Esophagus muscularis mucosa (tissue), 4 donors: ENCODE measurements at regions of chr4 and their contacts with region 1.

Region 1: GRCh38 chr4:173025131-173025530 is 143.5 kb upstream of the GALNT7 start:
- DNase-seq: peak; percentile 88
- H3K4me3 ChIP-seq: no peak overlapping the region
- H3K27ac ChIP-seq: no peak overlapping the region
- H3K4me1 ChIP-seq: peaks cover 0 to 3% (median 0%) of the 10 kb centered on the region in 4 donors
- H3K27me3 ChIP-seq: no peaks in the 10 kb centered on the region
- CTCF ChIP-seq: peak; percentile 64 to 74 (median 71)
- EP300 ChIP-seq: no peak
- POLR2A ChIP-seq: no peak

Region 2: DNA sequence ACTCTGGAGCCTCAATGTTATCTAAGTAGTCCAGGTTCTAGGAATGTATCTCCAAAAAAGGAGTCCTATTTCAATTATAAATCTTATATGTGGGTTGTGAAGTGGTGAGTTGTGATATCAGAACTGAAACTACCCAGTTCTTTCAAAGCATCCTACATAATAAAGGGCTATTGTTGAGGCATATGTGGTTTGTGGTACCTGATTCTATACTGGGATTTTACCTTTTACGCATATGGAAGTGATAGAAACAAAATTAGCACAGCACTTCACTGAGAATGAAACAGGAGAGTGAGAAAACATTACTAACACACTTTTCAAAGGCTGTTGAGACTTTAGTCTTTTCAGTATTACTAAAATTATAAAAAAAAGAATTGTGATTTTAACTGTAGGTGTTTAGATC is 274.2 kb before region 1 on chr4:
- intact Hi-C with region 1: no loop called
- DNase-seq: no peak
- H3K4me3 ChIP-seq: no peak overlapping the region
- H3K27ac ChIP-seq: no peak overlapping the region
- H3K4me1 ChIP-seq: no peaks in the 10 kb centered on the region
- H3K27me3 ChIP-seq: no peaks in the 10 kb centered on the region
- CTCF ChIP-seq: no peak
- EP300 ChIP-seq: no peak
- POLR2A ChIP-seq: no peak

Region 3: DNA sequence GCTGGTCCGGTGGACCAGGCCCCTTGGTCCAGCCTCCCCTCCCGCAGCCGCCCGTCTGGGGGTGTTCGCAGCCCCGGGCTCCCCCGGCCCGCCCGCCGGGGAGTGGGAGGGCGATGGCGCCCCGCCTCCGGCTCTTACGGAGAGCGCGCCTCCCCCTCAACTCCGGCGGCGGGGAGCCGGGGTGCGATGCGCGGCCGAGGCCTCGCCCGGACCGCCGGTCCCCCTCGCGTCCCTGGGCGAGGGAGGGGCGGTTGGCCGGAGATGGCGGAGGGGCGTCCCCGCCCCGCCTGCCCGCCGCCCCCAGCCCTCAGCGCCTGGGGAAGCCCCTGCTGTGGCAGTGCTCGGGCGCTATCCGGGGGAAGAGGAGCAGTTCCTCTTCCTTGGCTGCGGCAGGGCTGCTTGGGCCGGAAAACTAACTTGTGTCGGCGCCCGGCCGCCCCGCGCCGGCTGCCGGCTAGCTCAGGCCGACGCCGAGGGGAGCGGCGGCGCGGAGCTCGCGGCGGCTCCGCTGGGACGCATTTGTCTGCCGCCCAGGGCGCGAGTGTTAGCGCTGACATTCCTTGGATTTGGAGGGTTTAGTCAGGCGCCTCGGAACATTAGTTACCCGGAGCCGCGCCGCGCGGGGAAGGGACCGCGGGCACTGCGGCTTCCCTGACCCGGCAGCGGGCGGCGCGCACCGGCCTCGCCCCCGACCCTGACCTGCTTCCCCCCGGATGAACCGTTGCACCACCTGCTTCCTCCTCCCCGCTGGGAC is 144.5 kb after region 1 on chr4:
- intact Hi-C with region 1: loop called (anchors 10 kb)
- DNase-seq: peak; percentile 91
- H3K4me3 ChIP-seq: peak overlapping the region; percentile 88 to 99 (median 92)
- H3K27ac ChIP-seq: peak overlapping the region; percentile 91 to 95 (median 93)
- H3K4me1 ChIP-seq: peaks cover 7 to 29% (median 23%) of the 10 kb centered on the region in 4 donors
- H3K27me3 ChIP-seq: no peaks in the 10 kb centered on the region
- CTCF ChIP-seq: no peak
- EP300 ChIP-seq: no peak
- POLR2A ChIP-seq: no peak

Region 4: DNA sequence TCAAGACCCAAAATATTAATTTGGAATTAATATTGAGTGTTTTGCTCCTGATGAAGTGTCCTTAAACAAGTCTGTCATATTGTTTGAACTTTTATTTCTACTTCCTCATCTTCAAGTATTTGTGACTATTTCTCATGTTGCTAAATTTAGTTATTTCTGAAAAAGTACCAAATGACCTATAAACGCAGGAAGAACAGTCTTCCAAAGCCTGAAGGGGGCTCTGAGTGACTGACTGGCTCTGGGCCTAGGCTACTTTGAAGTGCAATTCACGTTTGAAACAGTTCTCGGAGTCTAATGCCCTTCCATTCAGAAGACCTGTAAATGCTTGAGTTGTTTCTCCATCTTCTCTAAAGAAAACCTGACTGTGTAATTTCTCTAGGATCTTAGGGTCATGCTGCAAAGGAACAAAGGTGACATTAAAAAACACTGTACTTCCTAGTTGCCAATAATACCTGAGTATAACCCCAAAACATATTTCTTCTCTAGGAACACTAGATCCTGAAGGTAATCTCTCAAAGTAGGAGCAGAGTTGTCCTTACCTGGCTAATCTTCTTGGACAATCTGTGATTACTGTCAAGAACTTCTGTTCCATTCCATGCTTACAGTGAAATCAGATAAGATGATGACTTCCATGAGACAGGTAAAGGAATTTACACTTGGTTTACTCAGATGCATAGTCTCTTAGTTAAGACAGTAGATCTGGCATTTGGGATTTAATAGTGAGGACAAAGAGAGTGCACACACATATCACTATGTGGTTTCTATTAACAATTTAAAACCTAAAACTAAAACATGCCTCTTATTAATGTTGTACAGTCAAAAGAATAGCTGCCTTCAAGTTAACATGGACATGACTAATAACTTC is 170.2 kb after region 1 on chr4:
- intact Hi-C with region 1: no loop called
- DNase-seq: no peak
- H3K4me3 ChIP-seq: no peak overlapping the region
- H3K27ac ChIP-seq: no peak overlapping the region
- H3K4me1 ChIP-seq: peaks cover 3 to 28% (median 18%) of the 10 kb centered on the region in 4 donors
- H3K27me3 ChIP-seq: no peaks in the 10 kb centered on the region
- CTCF ChIP-seq: no peak
- EP300 ChIP-seq: no peak
- POLR2A ChIP-seq: no peak

Region 5: GRCh38 chr4:173257732-173258717 is 232.9 kb after region 1 on chr4:
- intact Hi-C with region 1: loop called (anchors 2 kb)
- DNase-seq: no peak
- H3K4me3 ChIP-seq: no peak overlapping the region
- H3K27ac ChIP-seq: no peak overlapping the region
- H3K4me1 ChIP-seq: peaks cover 0 to 4% (median 0%) of the 10 kb centered on the region in 4 donors
- H3K27me3 ChIP-seq: no peaks in the 10 kb centered on the region
- CTCF ChIP-seq: peak; percentile 78 to 84 (median 82)
- EP300 ChIP-seq: no peak
- POLR2A ChIP-seq: no peak